ENCODE measurements at regions of chr14 and their contacts with region 1.

Region 1: DNA sequence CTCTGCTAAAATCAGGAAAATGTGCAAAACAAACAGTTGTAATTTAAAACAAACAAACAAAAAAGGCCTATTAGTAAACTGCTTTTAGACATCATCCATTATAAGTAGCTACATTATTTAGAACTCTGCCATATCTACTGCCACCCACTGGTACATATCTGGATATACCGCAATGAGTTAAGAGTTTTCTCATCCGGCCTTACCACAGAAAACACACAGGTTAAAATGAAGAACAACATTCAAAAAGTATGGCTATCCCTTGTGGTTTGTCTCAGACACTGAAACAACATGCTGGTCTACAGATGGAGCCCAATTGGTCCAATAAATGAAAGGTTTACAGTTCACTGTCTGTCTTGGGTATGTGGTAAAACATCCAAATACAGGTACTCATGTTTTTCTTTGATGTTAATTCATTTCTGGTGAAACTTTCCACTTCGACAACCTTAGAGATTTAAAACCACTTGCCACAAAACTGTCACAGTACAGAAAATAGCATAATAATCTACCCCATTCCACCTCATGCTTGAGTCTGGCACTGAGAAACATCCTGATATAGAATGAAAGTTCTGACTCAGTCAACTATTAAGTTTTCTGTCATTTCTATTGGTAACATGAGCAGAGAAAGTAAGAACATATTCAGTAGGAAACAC is 354.3 kb downstream of the CEP128 start:
- DNase-seq: no peak
- H3K4me3 ChIP-seq: no peak overlapping the region
- CTCF ChIP-seq: peak; percentile 40

Region 2: DNA sequence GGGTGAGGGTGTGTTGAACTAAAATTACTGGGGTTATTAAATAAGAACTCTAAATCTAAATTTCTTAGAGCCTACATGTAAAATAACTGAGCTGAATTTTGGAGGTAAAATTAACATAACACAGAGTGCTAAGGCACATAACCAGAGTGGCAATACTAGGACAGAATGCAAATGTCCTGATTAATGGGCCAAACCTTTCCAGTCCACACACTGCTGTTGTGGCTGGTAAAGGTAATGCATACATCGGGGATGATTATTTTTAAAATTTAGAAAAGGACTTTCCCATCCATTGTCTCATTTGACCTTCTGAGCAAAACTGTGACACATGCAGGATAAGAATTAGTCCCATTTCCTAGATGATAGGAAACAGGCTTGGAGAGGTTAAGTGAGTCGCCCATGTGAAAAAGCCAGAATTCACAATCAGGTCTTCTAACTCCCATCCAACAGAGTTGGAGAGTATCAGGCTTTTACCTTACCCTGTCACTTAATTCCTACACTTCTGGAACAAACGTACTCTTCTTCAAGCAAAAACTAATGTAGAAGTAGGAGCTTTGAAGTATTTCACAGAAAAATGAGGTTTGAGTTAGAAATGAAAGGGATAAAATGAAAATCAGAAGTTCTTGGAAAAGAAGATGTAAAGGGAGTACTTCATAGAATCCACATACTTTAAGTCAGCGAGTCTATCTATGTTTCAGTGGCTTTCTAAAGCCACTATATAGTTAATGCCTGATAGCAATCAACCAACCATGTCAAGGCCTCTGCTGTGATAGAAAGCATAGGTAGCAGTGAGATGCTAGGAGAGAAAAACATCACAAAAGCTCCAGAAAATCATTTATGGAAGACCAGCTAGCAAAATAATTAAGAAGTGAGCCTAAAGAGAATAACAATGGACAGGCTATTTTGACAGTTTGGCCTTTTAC is 41.0 kb before region 1 on chr14:
- CTCF ChIA-PET with region 1: no interaction called
- POLR2A ChIA-PET with region 1: no interaction called
- DNase-seq: no peak
- H3K4me3 ChIP-seq: no peak overlapping the region
- CTCF ChIP-seq: no peak

Region 3: DNA sequence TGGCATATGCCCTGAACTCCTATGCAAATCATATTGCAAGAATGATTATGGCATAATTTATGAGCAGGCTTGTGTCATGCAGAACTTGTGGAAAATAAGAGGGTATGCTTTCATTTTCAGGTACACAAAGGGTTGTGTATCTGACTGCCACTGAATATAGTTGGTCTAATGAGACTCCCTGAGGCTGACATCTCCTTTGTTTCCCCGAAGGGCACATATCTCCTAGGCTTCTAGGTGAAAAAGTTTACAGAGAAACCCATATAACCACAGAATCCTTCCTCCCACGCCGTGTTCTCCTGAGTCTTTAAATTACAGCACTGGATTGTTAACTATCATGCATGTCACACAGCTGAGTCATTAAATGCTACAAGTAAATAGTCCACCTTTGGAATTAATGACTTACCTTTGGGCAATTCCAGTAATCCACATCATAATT is 19.2 kb before region 1 on chr14:
- CTCF ChIA-PET with region 1: interaction called, 10 read pairs
- POLR2A ChIA-PET with region 1: no interaction called
- DNase-seq: peak; percentile 5
- H3K4me3 ChIP-seq: no peak overlapping the region
- CTCF ChIP-seq: no peak

Measured in AG04449 (cell line).